Right ventricle myocardium superior (tissue), 1 donor: ENCODE measurements at regions of chr2 and their contacts with region 1.

Region 1: DNA sequence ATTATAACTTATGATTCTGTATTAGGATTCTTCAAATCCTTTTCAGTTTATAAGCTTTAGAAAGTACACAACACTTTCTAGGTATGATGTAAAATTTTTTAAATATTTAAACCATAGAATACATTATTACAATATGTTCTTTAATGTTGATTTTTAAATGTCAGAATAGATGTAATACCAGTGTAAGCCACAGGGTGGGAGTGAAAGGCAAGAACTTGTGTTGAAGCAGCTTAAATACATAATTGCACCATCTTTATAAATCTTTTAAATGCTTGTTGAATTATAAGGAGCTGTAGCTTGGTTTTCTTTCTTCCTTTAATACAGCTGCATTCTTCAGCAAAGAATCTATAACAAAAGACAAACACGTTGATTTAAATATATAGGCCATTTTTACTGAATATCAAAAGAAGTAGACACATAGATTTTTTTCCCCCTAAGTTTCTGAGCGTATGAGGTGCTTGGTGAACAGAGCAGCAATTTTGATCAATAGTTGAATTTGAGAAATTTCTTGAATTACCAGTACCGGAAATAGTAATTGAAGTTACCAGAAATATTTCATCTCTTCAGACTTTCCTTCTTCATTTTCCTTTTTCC is 63.0 kb downstream of the TANK start:
- DNase-seq: no peak
- ATAC-seq: peak; percentile 46

Region 2: DNA sequence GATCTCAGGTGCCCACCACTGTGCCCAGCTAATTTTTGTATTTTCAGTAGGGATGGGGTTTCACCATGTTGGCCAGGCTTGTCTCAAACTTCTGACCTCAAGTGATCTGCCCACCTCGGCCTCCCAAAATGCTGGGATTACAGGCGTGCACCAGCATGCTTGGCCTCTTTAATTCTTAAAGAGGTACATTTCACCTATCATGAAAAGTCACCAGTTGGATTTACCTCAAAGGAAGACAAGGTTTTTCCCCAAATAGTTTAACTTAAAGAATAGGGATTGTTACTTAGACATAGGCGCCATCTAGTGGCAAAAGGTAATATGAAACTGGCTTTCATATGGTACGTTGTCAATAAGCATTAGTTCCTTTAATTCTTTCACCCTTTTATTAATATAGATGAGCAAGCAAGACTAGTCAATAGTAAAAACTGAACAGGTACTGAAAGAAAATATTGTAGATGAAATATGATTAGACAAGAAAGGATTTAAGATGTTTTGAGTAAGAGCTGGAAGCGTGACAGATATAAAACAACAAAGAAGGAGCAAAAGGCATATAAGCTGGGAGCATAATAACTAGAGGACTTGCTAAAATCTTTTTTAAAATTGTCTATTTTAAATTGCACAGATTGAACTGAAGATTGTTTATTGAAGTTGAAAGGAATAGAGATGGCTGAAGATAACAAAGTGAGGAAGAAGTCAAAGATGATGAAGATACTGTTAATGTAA is 50.0 kb after region 1 on chr2:
- intact Hi-C with region 1: loop called (anchors 10 kb)
- DNase-seq: no peak
- ATAC-seq: no peak

Region 3: DNA sequence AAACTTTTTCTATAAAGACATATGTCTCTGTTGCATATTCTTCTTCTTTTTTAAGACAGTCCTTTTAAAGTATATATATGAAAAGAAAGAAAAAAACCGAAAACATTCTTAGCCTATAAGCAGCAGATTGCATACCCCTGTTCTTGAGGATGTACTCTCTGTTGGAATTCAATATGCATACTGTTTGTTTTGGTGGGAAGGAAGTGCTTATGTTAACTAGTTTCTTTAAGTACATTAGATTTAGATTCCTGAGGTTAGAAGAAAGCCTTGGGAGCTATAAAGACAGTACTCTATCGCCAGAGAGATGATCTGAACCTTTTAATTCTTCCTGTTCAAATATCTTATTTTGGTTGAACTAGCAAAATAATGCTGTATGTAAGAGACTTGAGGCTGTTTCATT is 146.1 kb after region 1 on chr2:
- intact Hi-C with region 1: no loop called
- DNase-seq: no peak
- ATAC-seq: no peak